Calu3 (cell line): ENCODE measurements at regions of chr4 and their contacts with region 1.

Region 1: DNA sequence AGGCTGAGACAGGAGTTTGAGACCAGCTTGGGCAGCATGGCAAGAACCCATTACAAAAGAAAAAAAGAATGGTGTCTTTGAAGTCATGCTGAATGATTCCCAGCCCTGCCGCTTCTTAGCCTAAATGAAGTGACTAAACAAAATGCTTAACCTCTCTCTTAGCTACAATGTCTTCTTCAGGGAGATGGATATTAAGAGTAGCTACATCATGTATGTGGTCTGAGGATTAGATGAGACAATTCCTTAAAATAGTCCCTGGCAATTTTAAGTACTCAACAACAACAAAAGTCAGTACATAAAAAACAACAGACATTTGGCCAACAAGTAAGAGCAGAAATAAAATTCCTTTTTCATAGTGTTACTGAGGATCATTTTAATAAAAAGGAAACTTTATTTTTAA is 64.3 kb upstream of the COX18 start:
- DNase-seq: no peak
- H3K4me3 Mint-ChIP-seq: no peak overlapping the region
- H3K27ac Mint-ChIP-seq: no peak overlapping the region
- H3K4me1 Mint-ChIP-seq: no peaks in the 10 kb centered on the region
- H3K27me3 Mint-ChIP-seq: no peaks in the 10 kb centered on the region
- CTCF ChIP-seq: no peak

Region 2: GRCh38 chr4:73258686-73259570 is 125.1 kb after region 1 on chr4 and contains the start of gene ANKRD17:
- CTCF ChIA-PET with region 1: no interaction called
- intact Hi-C with region 1: loop called (anchors 5 kb)
- DNase-seq: peak; percentile 88
- H3K4me3 Mint-ChIP-seq: peak within 1 kb of the TSS; percentile 97
- H3K27ac Mint-ChIP-seq: peak within 1 kb of the TSS; percentile 98
- H3K4me1 Mint-ChIP-seq: peaks cover 8% of the 10 kb centered on the region
- H3K27me3 Mint-ChIP-seq: no peaks in the 10 kb centered on the region
- CTCF ChIP-seq: no peak
- total RNA-seq, gene ANKRD17: 54.0 and 54.6 TPM in 2 replicates

Region 3: DNA sequence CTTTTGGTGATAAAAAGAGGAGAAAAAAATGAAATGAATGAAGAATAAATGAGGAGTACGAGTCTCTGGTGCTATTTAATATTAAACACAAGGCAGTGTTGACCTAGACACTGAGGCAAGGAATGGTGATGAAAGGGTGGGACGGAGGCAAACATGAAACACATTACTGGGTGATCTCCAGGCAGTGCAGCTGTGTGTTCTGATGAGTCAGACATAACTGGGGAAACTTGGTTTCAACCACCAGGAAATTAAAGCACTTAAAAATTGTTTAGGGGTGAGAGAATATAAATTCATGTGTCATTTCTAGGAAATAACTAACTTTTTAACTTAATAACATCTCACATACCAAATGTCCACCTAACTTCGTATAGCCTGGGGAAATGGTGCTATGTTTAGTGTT is 683.0 kb after region 1 on chr4:
- CTCF ChIA-PET with region 1: no interaction called
- intact Hi-C with region 1: no loop called
- DNase-seq: peak; percentile 49
- H3K4me3 Mint-ChIP-seq: peak overlapping the region; percentile 5
- H3K27ac Mint-ChIP-seq: peak overlapping the region; percentile 95
- H3K4me1 Mint-ChIP-seq: peaks cover 57% of the 10 kb centered on the region
- H3K27me3 Mint-ChIP-seq: no peaks in the 10 kb centered on the region
- CTCF ChIP-seq: no peak